ENCODE measurements at regions of chr13 and their contacts with region 1.

Region 1: GRCh38 chr13:29850224-29850898 is at the start of gene UBL3:
- DNase-seq: peak; percentile 89
- H3K4me3 Mint-ChIP-seq: peak within 1 kb of the TSS; percentile 97
- H3K27ac Mint-ChIP-seq: peak within 1 kb of the TSS; percentile 94
- H3K4me1 Mint-ChIP-seq: no peaks in the 10 kb centered on the region
- H3K27me3 Mint-ChIP-seq: no peaks in the 10 kb centered on the region
- CTCF ChIP-seq: no peak
- total RNA-seq, gene UBL3: 13.8 and 15.9 TPM in 2 replicates

Region 2: DNA sequence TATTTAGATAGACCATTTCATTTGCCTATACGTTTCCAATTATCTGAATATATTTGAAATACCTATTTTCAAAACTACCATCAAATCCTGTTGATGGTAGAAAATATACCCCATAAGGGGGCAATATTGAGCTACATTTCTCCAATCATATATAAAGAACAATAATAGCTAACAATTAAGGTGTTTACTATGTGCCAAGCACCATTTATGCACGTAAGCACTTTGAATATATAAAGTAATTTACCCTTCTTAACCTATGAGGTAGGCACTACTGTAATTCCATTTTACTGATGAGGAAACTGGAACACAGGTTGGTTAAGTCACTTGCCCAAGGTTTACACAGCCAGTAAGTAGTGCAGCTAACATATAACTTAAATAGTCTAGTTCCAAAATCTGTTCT is 79.1 kb before region 1 on chr13:
- CTCF ChIA-PET with region 1: interaction called, 4 read pairs
- intact Hi-C with region 1: loop called (anchors 5 kb)
- DNase-seq: no peak
- H3K4me3 Mint-ChIP-seq: no peak overlapping the region
- H3K27ac Mint-ChIP-seq: no peak overlapping the region
- H3K4me1 Mint-ChIP-seq: no peaks in the 10 kb centered on the region
- H3K27me3 Mint-ChIP-seq: no peaks in the 10 kb centered on the region
- CTCF ChIP-seq: no peak

Region 3: DNA sequence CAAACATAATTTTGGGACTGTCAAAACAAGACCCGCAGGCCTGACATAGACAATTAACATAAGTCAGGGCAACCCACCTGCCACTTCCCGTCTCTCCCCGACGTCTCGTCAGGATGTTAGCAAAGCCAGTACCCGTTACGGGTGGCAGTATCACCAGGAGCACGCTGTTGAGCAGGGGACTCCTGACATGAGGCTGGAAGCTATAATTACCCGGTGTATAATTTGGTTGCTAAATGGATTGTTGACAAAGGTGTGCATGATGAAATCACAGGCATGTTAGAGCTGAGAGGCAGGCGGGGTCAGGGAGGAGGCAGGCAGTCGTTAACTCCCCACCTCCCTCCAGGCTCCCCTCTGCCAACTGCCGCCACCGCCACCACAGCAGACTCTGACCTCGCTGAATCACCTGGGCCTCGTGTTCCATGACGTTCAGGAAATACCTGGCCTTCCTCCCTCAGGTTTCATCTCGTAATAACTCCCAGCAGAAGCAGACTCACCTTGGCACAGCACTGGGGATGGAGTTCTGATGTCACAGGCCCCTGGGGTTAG is 258.4 kb after region 1 on chr13:
- CTCF ChIA-PET with region 1: interaction called, 5 read pairs
- intact Hi-C with region 1: loop called (anchors 1 kb)
- DNase-seq: peak; percentile 79
- H3K4me3 Mint-ChIP-seq: peak overlapping the region; percentile 43
- H3K27ac Mint-ChIP-seq: peak overlapping the region; percentile 98
- H3K4me1 Mint-ChIP-seq: peaks cover 53% of the 10 kb centered on the region
- H3K27me3 Mint-ChIP-seq: no peaks in the 10 kb centered on the region
- CTCF ChIP-seq: no peak

Region 4: GRCh38 chr13:30114571-30115256 is 264.4 kb after region 1 on chr13:
- CTCF ChIA-PET with region 1: interaction called, 3 read pairs
- intact Hi-C with region 1: loop called (anchors 1 kb)
- DNase-seq: peak; percentile 92
- H3K4me3 Mint-ChIP-seq: peak overlapping the region; percentile 73
- H3K27ac Mint-ChIP-seq: peak overlapping the region; percentile 66
- H3K4me1 Mint-ChIP-seq: peaks cover 27% of the 10 kb centered on the region
- H3K27me3 Mint-ChIP-seq: no peaks in the 10 kb centered on the region
- CTCF ChIP-seq: peak; percentile 84